ENCODE measurements at regions of chr7 and their contacts with region 1.

Region 1: DNA sequence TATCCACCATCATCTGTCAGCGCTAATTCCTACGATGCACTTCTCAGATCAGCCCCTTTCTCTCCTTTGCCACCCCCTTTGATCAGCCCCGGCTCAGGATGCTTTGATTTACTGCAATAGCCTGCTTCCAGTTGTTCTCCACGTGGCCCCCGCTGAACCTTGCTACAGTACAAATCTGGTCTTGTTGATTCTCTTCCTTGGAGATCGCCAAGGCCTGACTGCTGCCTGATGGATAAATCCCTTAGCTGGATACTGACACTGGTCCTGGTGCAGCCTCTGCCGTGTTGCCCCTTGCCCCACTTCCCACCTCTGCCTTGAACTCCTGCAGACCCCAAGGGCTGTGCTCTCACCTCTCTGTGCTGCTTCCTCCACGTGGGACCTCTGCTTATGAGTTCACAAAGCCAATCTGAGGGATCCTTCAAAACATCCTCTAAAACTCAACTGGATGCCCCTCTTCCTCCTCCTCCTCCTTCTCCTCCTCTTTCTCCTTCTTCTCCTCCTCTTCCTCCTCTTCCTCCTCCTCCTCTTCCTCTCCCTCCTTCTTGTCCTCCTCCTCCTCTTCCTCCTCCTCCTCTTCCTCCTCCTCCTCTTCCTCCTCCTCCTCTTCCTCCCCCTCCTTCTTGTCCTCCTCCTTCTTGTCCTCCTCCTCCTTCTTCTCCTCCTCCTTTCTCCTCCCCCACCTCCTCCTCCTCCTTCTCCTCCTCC is 15.3 kb downstream of the PLXNA4 start:
- DNase-seq: no peak
- ATAC-seq: no peak
- H3K4me3 ChIP-seq: no peak overlapping the region
- H3K27ac ChIP-seq: no peak overlapping the region
- H3K4me1 ChIP-seq: no peaks in the 10 kb centered on the region
- H3K27me3 ChIP-seq: no peaks in the 10 kb centered on the region
- CTCF ChIP-seq: no peak
- POLR2A ChIP-seq: no peak
- RAD21 ChIP-seq: no peak

Region 2: DNA sequence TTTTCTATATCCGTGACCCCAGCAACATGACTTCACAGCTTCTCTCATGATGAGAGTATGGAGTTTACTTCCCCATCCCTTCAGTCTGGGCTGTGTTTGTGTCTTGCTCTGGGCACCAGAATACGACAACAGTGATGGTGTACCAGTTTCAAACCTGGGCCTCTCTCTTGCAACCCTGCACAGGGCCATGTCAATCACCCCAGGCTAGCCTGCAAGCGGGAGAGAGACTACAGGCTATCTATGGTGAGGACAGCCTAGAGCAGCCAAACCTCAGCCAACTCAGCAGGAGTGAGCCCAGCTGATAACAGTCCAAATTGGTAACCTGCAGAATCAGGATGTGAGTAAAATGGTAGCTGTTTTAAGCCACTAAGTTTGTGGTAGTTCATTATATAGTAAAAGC is 285.1 kb after region 1 on chr7:
- CTCF ChIA-PET with region 1: no interaction called
- POLR2A ChIA-PET with region 1: no interaction called
- dilution Hi-C with region 1: no loop called
- in situ Hi-C with region 1: no loop called
- intact Hi-C with region 1: no loop called
- DNase-seq: no peak
- ATAC-seq: no peak
- H3K4me3 ChIP-seq: no peak overlapping the region
- H3K27ac ChIP-seq: no peak overlapping the region
- H3K4me1 ChIP-seq: no peaks in the 10 kb centered on the region
- H3K27me3 ChIP-seq: no peaks in the 10 kb centered on the region
- CTCF ChIP-seq: no peak
- POLR2A ChIP-seq: no peak
- RAD21 ChIP-seq: no peak

Region 3: DNA sequence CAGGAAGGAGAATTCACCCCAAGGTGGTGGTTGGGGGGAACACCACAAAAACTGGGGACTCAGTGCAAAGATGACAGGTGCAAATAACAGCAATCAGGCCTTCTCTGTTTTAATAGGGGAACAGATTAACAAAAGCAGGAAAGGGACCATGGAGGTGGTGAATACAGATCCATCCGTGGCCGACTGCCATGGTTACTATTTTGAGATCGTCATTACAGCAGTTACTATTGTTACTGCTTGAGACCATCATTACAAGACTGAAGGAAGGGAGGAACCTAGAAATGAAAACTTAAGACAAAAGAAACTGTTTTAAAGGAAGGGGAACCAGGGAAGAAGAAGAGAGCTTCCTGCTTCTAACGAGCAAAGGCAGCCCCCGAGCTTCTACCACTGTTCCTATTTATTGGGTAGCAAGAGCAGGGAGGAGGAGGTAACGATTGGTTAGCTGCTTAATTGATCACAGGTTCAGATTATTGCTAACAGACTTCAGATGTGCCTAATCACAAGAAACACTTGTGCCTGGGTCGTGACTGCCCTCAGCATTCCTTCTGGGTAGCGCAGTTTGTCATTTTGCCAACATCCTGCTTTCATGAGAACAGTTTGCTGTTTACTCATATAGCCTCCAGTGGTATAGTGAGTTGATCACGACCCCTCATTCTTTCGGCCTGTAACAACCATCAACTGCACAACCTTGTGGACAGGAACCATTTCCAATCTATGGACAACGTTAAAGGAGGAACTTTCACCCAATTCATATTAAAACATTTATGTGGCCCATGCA is 304.6 kb after region 1 on chr7:
- CTCF ChIA-PET with region 1: no interaction called
- POLR2A ChIA-PET with region 1: no interaction called
- dilution Hi-C with region 1: no loop called
- in situ Hi-C with region 1: no loop called
- intact Hi-C with region 1: no loop called
- DNase-seq: peak; percentile 24
- ATAC-seq: no peak
- H3K4me3 ChIP-seq: no peak overlapping the region
- H3K27ac ChIP-seq: no peak overlapping the region
- H3K4me1 ChIP-seq: no peaks in the 10 kb centered on the region
- H3K27me3 ChIP-seq: no peaks in the 10 kb centered on the region
- CTCF ChIP-seq: no peak
- POLR2A ChIP-seq: no peak
- RAD21 ChIP-seq: no peak

Region 4: DNA sequence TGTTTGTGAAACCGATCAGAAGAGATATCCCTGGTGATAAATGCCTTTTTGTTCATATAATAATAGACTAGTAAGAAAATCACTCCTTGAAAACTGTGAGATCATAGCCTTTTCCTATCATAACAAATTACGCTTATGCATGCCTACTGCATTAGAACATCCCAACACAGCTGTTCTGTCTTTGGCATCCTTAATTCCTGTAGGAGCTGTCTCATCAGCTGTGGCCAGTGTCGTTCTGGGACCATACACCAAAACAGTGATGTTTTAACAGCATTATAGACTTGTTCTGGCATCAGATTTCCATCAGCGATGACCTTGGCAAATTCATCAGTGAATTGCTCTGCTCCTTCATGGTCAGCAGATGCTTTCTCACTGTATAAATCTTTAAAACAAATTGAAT is 1142.6 kb after region 1 on chr7:
- CTCF ChIA-PET with region 1: no interaction called
- POLR2A ChIA-PET with region 1: no interaction called
- dilution Hi-C with region 1: no loop called
- in situ Hi-C with region 1: no loop called
- intact Hi-C with region 1: loop called (anchors 5 kb)
- DNase-seq: peak; percentile 98
- ATAC-seq: peak; percentile 93
- H3K4me3 ChIP-seq: no peak overlapping the region
- H3K27ac ChIP-seq: no peak overlapping the region
- H3K4me1 ChIP-seq: peaks cover 6% of the 10 kb centered on the region; the same call in 1 of the 2 replicates
- H3K27me3 ChIP-seq: no peaks in the 10 kb centered on the region
- CTCF ChIP-seq: no peak
- POLR2A ChIP-seq: no peak
- RAD21 ChIP-seq: no peak